GM12878 (cell line): ENCODE measurements at regions of chr3 and their contacts with region 1.

Region 1: DNA sequence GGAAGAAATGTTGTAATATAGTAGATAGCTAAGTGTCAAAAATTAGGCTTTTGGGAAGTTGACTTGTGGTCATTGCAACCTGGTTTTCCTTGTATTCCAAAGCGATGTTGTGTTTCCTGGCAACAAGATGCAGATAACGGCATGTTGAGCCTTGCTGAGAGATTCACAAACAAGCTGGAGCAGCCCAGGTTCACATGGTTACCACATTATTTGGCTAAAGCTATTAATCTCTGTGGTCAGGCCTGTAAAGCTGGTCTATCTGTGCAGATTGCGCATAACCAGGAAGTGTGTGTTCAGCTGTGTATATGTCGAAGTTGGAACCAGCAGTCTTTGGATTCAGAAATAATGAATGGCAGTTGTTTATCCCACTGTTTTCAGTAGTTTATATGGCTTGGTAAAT is 6.6 kb downstream of the TIPARP start:
- DNase-seq: no peak
- ATAC-seq: peak; percentile 76
- H3K4me3 ChIP-seq: peak overlapping the region; percentile 44
- H3K27ac ChIP-seq: peak overlapping the region; percentile 40
- H3K4me1 ChIP-seq: peaks cover 36% of the 10 kb centered on the region
- H3K27me3 ChIP-seq: no peaks in the 10 kb centered on the region
- CTCF ChIP-seq: no peak
- EP300 ChIP-seq: peak; percentile 33 to 90; a peak in 1 of 4 replicates
- POLR2A ChIP-seq: no peak
- RAD21 ChIP-seq: no peak

Region 2: GRCh38 chr3:156554842-156555687 is 125.9 kb before region 1 on chr3 and contains the start of gene SSR3:
- CTCF ChIA-PET with region 1: interaction called, 8 read pairs
- POLR2A ChIA-PET with region 1: interaction called, 20 read pairs
- RAD21 ChIA-PET with region 1: interaction called, 15 read pairs
- SMC1A ChIA-PET with region 1: interaction called, 23 read pairs
- in situ Hi-C with region 1: no loop called
- intact Hi-C with region 1: no loop called
- DNase-seq: peak; percentile 95
- ATAC-seq: peak; percentile 99
- H3K4me3 ChIP-seq: peak within 1 kb of the TSS; percentile 92
- H3K27ac ChIP-seq: peak within 1 kb of the TSS; percentile 83
- H3K4me1 ChIP-seq: peaks cover 2% of the 10 kb centered on the region; the same call in 1 of the 2 replicates
- H3K27me3 ChIP-seq: no peaks in the 10 kb centered on the region
- CTCF ChIP-seq: peak in 1 of 3 experiments; percentile 2; a peak in 1 of 6 replicates
- EP300 ChIP-seq: no peak; a peak in 1 of 4 replicates
- POLR2A ChIP-seq: peak; percentile 95
- RAD21 ChIP-seq: no peak
- polyA plus RNA-seq, gene SSR3: 278 to 345 TPM

Region 3: DNA sequence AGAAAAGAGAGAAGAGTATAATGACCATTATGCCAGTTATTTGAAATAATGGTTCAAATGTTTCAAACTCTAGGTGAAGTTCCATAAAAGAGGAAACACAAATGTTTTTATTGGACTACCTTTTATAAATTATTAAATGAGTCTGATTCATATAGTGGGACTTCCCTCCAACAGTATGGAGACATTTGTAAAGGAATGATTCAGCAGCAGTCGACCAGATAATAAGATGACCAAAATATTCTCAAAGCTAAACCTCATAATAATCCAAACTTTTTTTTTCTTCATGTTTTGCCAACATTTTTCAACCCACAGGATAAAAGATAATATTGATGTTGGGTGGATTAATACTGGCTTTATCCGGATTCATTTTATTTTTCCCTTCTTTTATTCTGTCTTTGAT is 12.2 kb after region 1 on chr3:
- CTCF ChIA-PET with region 1: interaction called, 6 read pairs
- POLR2A ChIA-PET with region 1: interaction called, 4 read pairs
- RAD21 ChIA-PET with region 1: interaction called, 8 read pairs
- SMC1A ChIA-PET with region 1: interaction called, 72 read pairs
- in situ Hi-C with region 1: no loop called
- intact Hi-C with region 1: no loop called
- DNase-seq: no peak
- ATAC-seq: no peak
- H3K4me3 ChIP-seq: no peak overlapping the region
- H3K27ac ChIP-seq: no peak overlapping the region
- H3K4me1 ChIP-seq: peaks cover 13% of the 10 kb centered on the region
- H3K27me3 ChIP-seq: no peaks in the 10 kb centered on the region
- CTCF ChIP-seq: no peak
- EP300 ChIP-seq: no peak
- POLR2A ChIP-seq: no peak
- RAD21 ChIP-seq: no peak

Region 4: GRCh38 chr3:156723182-156723619 is 42.2 kb after region 1 on chr3:
- CTCF ChIA-PET with region 1: interaction called, 4 read pairs
- POLR2A ChIA-PET with region 1: no interaction called
- RAD21 ChIA-PET with region 1: interaction called, 3 read pairs
- SMC1A ChIA-PET with region 1: interaction called, 12 read pairs
- in situ Hi-C with region 1: no loop called
- intact Hi-C with region 1: no loop called
- DNase-seq: no peak
- ATAC-seq: peak; percentile 55
- H3K4me3 ChIP-seq: no peak overlapping the region
- H3K27ac ChIP-seq: no peak overlapping the region
- H3K4me1 ChIP-seq: no peaks in the 10 kb centered on the region
- H3K27me3 ChIP-seq: no peaks in the 10 kb centered on the region
- CTCF ChIP-seq: no peak
- EP300 ChIP-seq: no peak
- POLR2A ChIP-seq: no peak
- RAD21 ChIP-seq: no peak

Region 5: GRCh38 chr3:157064402-157064801 is 383.4 kb after region 1 on chr3:
- CTCF ChIA-PET with region 1: interaction called, 10 read pairs
- POLR2A ChIA-PET with region 1: no interaction called
- RAD21 ChIA-PET with region 1: interaction called, 7 read pairs
- SMC1A ChIA-PET with region 1: interaction called, 10 read pairs
- in situ Hi-C with region 1: no loop called
- intact Hi-C with region 1: no loop called
- DNase-seq: peak; percentile 48
- ATAC-seq: peak; percentile 81
- H3K4me3 ChIP-seq: no peak overlapping the region
- H3K27ac ChIP-seq: peak overlapping the region; percentile 48; the same call in 1 of the 2 replicates
- H3K4me1 ChIP-seq: peaks cover 38% of the 10 kb centered on the region
- H3K27me3 ChIP-seq: no peaks in the 10 kb centered on the region
- CTCF ChIP-seq: no peak
- EP300 ChIP-seq: peak; percentile 46 to 59; a peak in 2 of 4 replicates
- POLR2A ChIP-seq: no peak
- RAD21 ChIP-seq: 0 out of 2 replicates have a peak, but pooled peaks have one; percentile 14